ENCODE measurements at regions of chr11 and their contacts with region 1.

Region 1: DNA sequence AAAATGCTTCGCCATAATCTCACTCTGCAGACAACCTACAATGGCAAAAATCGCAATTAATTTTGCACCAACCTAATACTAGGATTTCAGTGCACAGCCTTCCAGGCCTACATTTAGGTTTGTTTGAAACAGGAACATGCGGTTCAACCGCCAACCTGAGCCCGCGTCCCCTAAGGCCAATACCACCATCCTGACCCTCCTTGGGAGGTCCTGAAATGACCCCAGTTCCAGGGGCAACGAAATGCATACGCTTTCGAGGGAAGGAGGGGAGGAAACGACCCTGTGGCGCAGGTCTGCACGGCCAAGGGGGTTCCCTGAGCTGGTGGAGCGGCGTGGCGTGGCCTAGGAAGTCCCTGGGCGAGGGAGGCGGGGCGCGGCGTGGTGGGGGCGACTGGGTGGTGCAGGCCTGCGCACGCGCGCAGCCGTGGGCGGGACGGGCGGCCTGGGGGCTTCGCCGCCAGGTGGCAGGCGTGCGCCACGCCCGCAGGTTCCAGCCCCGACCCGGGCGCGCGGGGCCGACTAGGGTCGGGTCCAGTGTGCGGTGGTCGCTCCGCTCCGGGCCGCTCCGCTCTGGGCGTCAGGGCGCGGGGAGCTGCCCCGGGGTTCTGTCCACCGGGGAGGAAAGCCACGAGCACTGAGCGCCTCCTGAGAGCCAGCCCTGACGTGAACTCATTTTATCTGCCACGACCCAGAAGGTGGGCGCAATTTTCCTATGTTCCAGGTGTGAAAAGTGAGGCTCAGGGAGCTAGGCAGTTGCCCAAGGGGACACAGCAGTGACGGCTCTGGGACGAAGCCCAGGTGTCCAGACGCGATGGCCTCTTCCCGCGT is 94.1 kb downstream of the SWAP70 start:
- DNase-seq: peak; percentile 57 to 93 (median 87)

Region 2: GRCh38 chr11:9613118-9613829 is 144.7 kb before region 1 on chr11:
- intact Hi-C with region 1: loop called (anchors 5 kb)
- DNase-seq: peak; percentile 87 to 97 (median 94)

Region 3: DNA sequence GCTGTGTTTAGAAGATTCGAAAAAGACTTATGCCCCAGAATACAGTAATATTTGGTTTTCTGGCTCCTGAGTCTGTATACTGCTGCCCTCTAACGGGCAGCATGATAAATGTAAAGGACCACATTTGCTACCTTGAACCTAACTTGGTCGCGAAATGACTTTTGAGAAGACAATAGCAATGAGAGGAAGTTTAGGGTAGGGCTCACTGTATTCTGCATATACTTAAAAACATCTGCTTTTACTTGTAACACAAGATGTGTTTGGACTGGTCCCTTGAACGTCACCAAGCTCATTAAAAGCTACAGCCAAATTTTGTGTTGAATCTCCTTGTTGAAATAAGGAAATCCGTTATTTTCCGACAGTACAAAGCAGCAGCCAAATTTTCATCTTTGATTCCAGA is 215.0 kb after region 1 on chr11:
- intact Hi-C with region 1: loop called (anchors 5 kb)
- DNase-seq: peak in 6 of 42 donors; percentile 11 to 49 (median 30)

Region 4: DNA sequence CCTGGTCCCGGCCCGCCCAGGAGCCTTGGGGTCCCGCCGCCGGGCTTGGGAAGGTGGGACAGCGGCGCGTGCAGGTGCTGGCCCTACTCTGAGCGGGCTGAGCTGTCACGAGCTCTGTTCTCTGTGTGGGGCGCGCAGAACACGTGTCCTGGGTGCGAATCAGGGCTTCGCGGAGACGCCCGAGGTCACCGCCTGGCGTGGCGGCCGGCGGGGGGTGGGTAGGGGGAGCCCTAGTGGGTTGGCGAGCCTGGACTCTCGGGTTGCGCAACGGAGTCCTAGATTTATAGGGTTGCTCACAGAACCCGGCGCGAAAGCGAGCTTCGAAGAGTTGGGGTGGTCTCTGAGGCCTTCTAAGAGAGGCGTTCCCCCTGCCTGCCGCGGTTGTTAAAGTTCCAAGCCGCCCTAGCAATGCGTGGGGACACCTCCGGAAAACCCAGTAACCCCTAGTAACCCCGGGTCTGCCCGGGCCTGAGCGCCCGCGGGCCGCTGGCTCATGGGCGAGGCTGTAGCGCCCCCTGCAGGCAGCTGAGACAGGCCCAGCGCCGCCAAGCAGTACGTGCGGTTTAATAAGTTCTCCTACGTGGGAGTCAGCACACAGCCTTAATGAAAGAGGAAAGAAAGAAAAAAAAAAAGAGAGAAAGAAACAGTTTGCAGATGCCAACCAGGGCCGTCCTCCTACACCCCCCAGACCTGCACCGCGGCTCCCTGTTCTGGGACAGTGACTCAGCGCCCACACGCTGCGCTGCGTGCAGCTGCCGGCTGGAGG is 549.6 kb after region 1 on chr11:
- intact Hi-C with region 1: loop called (anchors 5 kb)
- DNase-seq: peak; percentile 54 to 92 (median 82)

Measured in head of caudate nucleus (tissue), 42 donors.